PC-3 (cell line): ENCODE measurements at regions of chr10 and their contacts with region 1.

Region 1: DNA sequence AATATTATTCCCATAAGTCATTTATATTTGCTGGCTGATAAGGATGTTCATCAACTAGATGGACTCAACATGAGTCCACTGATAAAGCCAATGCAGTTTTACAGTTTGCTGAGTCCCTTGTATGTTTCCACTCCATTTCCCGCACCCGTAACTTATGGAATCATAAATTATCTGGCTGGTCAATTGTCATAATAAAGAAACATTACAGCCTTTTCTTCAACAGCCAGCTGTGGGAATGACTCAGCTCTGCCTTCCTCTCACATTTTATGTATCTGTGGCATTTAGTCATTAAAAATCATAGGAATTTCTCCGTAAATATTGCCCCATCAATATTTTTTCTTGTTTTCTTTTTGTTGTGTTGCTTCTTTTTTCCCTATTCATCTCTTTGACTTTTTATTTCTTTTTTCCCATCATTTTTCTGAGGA is 22.3 kb upstream of the TMEM26 start:
- DNase-seq: peak; percentile 98
- ATAC-seq: peak; percentile 41
- H3K4me3 ChIP-seq: no peak overlapping the region
- H3K27ac ChIP-seq: no peak overlapping the region
- H3K4me1 ChIP-seq: peaks cover 36% of the 10 kb centered on the region
- H3K27me3 ChIP-seq: no peaks in the 10 kb centered on the region
- CTCF ChIP-seq: no peak

Region 2: GRCh38 chr10:60816628-60817397 is 658.6 kb before region 1 on chr10:
- CTCF ChIA-PET with region 1: no interaction called
- POLR2A ChIA-PET with region 1: no interaction called
- intact Hi-C with region 1: loop called (anchors 10 kb)
- DNase-seq: peak; percentile 97
- ATAC-seq: peak; percentile 93
- H3K4me3 ChIP-seq: no peak overlapping the region
- H3K27ac ChIP-seq: no peak overlapping the region
- H3K4me1 ChIP-seq: peaks cover 6% of the 10 kb centered on the region; the same call in 1 of the 2 replicates
- H3K27me3 ChIP-seq: no peaks in the 10 kb centered on the region
- CTCF ChIP-seq: peak; percentile 100

Region 3: DNA sequence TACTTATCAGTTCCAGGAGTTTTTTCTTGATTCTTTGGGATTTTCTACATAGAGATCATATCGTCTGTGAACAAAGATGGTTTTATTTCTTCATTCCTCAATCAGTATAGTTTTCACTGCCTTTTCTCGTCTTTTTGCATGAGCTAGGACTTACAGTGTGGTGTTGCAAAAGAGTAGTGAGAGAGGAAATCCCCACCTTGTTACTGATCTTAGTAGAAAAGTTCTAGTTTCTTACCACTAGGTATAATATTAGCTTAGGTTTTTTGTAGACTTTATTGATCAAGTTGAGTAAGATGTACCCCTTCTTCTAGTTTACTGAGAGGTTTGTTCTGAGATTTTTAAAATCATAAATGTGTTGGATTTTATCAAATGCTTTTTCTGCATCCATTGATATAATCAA is 145.6 kb before region 1 on chr10:
- CTCF ChIA-PET with region 1: no interaction called
- POLR2A ChIA-PET with region 1: no interaction called
- intact Hi-C with region 1: no loop called
- DNase-seq: no peak
- ATAC-seq: no peak
- H3K4me3 ChIP-seq: no peak overlapping the region
- H3K27ac ChIP-seq: no peak overlapping the region
- H3K4me1 ChIP-seq: no peaks in the 10 kb centered on the region
- H3K27me3 ChIP-seq: peaks cover 22% of the 10 kb centered on the region
- CTCF ChIP-seq: no peak

Region 4: GRCh38 chr10:61529208-61529607 is 53.7 kb after region 1 on chr10:
- CTCF ChIA-PET with region 1: no interaction called
- POLR2A ChIA-PET with region 1: no interaction called
- intact Hi-C with region 1: loop called (anchors 1 kb)
- DNase-seq: peak; percentile 100
- ATAC-seq: peak; percentile 100
- H3K4me3 ChIP-seq: peak overlapping the region; percentile 3; the same call in 1 of the 2 replicates
- H3K27ac ChIP-seq: no peak overlapping the region
- H3K4me1 ChIP-seq: peaks cover 14% of the 10 kb centered on the region
- H3K27me3 ChIP-seq: no peaks in the 10 kb centered on the region
- CTCF ChIP-seq: no peak

Region 5: DNA sequence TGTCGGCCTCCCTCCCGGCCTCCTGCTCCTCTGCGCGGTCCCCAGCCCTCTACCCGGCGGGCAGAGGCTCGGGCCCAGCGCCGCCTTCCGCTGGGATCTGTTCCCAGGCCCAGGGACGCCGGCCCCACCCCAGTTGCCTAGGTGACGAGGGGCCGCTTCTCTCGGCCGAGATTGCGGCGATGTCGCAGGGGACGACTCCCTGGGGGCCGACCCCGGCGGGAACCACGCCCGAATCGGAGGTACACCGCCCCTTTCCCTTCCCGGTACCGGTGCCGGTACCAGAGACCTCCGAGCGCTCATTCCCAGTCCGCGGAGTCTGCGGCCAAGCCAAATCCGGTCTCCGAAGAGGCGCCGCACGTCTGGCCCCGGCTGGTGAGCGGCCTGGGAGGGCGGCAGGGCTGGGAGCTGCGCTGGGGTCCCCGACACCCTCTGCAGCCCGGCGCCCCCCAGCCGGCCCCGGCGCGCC is 187.4 kb after region 1 on chr10 and contains the start of gene CABCOCO1:
- CTCF ChIA-PET with region 1: no interaction called
- POLR2A ChIA-PET with region 1: no interaction called
- intact Hi-C with region 1: loop called (anchors 5 kb)
- DNase-seq: peak; percentile 91
- ATAC-seq: peak; percentile 99
- H3K4me3 ChIP-seq: peak within 1 kb of the TSS; percentile 71
- H3K27ac ChIP-seq: no peak within 1 kb of the TSS
- H3K4me1 ChIP-seq: peaks cover 14% of the 10 kb centered on the region
- H3K27me3 ChIP-seq: no peaks in the 10 kb centered on the region
- CTCF ChIP-seq: peak; percentile 55
- total RNA-seq, gene CABCOCO1: not detected in 2 replicates

Region 6: DNA sequence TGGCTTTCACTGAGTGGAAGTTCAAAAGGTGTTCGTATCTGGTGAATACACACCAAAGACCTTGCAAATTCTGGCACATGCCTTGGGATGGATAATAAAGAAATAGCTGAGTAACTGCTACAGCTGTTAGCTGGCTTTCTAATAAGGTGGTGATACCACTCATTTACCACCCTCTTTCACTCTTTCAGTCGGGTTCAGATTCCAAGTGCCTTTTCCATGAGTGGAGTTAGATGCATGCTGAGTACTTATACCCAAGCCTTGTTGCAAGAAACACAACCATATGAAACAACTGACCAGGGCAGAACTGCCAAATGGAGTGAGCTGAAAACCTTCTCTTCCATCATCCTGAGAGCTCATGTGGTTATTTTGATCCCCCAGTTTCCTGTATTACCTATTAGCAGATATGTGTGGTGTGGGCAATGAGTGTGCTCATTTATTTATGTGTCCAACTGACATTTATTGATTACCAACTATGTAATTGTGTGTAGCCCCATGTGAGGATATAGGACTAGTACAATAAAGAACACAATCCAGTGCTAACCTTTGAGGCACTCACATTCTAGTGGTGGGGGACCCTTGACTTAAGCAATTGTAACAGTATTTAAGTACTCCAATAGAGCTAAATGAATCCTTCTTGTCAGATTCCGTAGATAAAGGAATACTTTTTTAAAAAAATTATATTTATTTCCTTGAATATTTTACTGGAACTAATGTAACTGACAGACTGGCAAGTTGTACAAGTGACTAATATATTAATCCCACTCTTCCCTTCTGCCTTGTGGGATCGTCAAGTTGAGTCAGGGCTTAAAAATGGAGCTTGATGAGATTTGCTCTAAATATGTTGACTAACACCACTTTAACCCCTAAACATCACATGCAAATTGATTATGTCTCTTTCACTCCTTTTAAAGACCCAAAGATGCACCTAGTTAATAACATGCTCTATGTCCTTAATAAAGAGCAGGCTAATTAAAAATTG is 550.7 kb after region 1 on chr10:
- CTCF ChIA-PET with region 1: no interaction called
- POLR2A ChIA-PET with region 1: no interaction called
- intact Hi-C with region 1: loop called (anchors 10 kb)
- DNase-seq: peak; percentile 99
- ATAC-seq: peak; percentile 37
- H3K4me3 ChIP-seq: no peak overlapping the region
- H3K27ac ChIP-seq: peak overlapping the region; percentile 86
- H3K4me1 ChIP-seq: peaks cover 77% of the 10 kb centered on the region
- H3K27me3 ChIP-seq: no peaks in the 10 kb centered on the region
- CTCF ChIP-seq: no peak